Caco-2 (cell line): ENCODE measurements at regions of chr12 and their contacts with region 1.

Region 1: GRCh38 chr12:48788854-48789796 is at the start of gene ADCY6:
- DNase-seq: peak; percentile 94
- H3K4me3 ChIP-seq: peak within 1 kb of the TSS; percentile 88
- H3K4me3 Mint-ChIP-seq: peak within 1 kb of the TSS; percentile 84
- H3K27ac Mint-ChIP-seq: peak within 1 kb of the TSS; percentile 91
- H3K4me1 ChIP-seq: peaks cover 29% of the 10 kb centered on the region
- H3K4me1 Mint-ChIP-seq: peaks cover 13% of the 10 kb centered on the region
- H3K27me3 ChIP-seq: no peaks in the 10 kb centered on the region
- H3K27me3 Mint-ChIP-seq: no peaks in the 10 kb centered on the region
- CTCF ChIP-seq: no peak
- total RNA-seq, gene ADCY6: 89.8 and 92.9 TPM in 2 replicates

Region 2: GRCh38 chr12:47819896-47820630 is 969.1 kb before region 1 on chr12 and contains the start of gene HDAC7:
- CTCF ChIA-PET with region 1: interaction called, 11 read pairs
- POLR2A ChIA-PET with region 1: no interaction called
- intact Hi-C with region 1: no loop called
- DNase-seq: peak; percentile 82 to 90
- H3K4me3 ChIP-seq: peak within 1 kb of the TSS; percentile 92
- H3K4me3 Mint-ChIP-seq: peak within 1 kb of the TSS; percentile 97
- H3K27ac Mint-ChIP-seq: peak within 1 kb of the TSS; percentile 99
- H3K4me1 ChIP-seq: peaks cover 56% of the 10 kb centered on the region
- H3K4me1 Mint-ChIP-seq: peaks cover 59% of the 10 kb centered on the region
- H3K27me3 ChIP-seq: no peaks in the 10 kb centered on the region
- H3K27me3 Mint-ChIP-seq: no peaks in the 10 kb centered on the region
- CTCF ChIP-seq: no peak
- total RNA-seq, gene HDAC7: 71.2 and 71.9 TPM in 2 replicates

Region 3: GRCh38 chr12:48572326-48572725 is 216.8 kb before region 1 on chr12:
- CTCF ChIA-PET with region 1: no interaction called
- POLR2A ChIA-PET with region 1: no interaction called
- intact Hi-C with region 1: no loop called
- DNase-seq: no peak
- H3K4me3 ChIP-seq: no peak overlapping the region
- H3K4me3 Mint-ChIP-seq: no peak overlapping the region
- H3K27ac Mint-ChIP-seq: no peak overlapping the region
- H3K4me1 ChIP-seq: no peaks in the 10 kb centered on the region
- H3K4me1 Mint-ChIP-seq: no peaks in the 10 kb centered on the region
- H3K27me3 ChIP-seq: peaks cover 2% of the 10 kb centered on the region
- H3K27me3 Mint-ChIP-seq: peaks cover 31% of the 10 kb centered on the region
- CTCF ChIP-seq: no peak

Region 4: GRCh38 chr12:48681738-48682532 is 107.2 kb before region 1 on chr12 and contains the start of gene KANSL2:
- CTCF ChIA-PET with region 1: no interaction called
- POLR2A ChIA-PET with region 1: interaction called, 15 read pairs
- intact Hi-C with region 1: no loop called
- DNase-seq: peak; percentile 99
- H3K4me3 ChIP-seq: peak within 1 kb of the TSS; percentile 83
- H3K4me3 Mint-ChIP-seq: peak within 1 kb of the TSS; percentile 92
- H3K27ac Mint-ChIP-seq: peak within 1 kb of the TSS; percentile 93
- H3K4me1 ChIP-seq: peaks cover 24% of the 10 kb centered on the region; the same call in 1 of the 2 replicates
- H3K4me1 Mint-ChIP-seq: peaks cover 14% of the 10 kb centered on the region
- H3K27me3 ChIP-seq: no peaks in the 10 kb centered on the region
- H3K27me3 Mint-ChIP-seq: no peaks in the 10 kb centered on the region
- CTCF ChIP-seq: no peak
- total RNA-seq, gene KANSL2: 59.7 and 67.2 TPM in 2 replicates

Region 5: GRCh38 chr12:48814262-48815125 is 25.4 kb after region 1 on chr12:
- CTCF ChIA-PET with region 1: interaction called, 18 read pairs
- POLR2A ChIA-PET with region 1: interaction called, 11 read pairs
- intact Hi-C with region 1: loop called (anchors 1 kb)
- DNase-seq: peak; percentile 83 to 96
- H3K4me3 ChIP-seq: peak overlapping the region; percentile 91
- H3K4me3 Mint-ChIP-seq: peak overlapping the region; percentile 97
- H3K27ac Mint-ChIP-seq: peak overlapping the region; percentile 58
- H3K4me1 ChIP-seq: peaks cover 21% of the 10 kb centered on the region
- H3K4me1 Mint-ChIP-seq: peaks cover 18% of the 10 kb centered on the region
- H3K27me3 ChIP-seq: no peaks in the 10 kb centered on the region
- H3K27me3 Mint-ChIP-seq: no peaks in the 10 kb centered on the region
- CTCF ChIP-seq: peak; percentile 99